Astrocyte of the cerebellum (primary cell): ENCODE measurements at regions of chr6 and their contacts with region 1.

Region 1: DNA sequence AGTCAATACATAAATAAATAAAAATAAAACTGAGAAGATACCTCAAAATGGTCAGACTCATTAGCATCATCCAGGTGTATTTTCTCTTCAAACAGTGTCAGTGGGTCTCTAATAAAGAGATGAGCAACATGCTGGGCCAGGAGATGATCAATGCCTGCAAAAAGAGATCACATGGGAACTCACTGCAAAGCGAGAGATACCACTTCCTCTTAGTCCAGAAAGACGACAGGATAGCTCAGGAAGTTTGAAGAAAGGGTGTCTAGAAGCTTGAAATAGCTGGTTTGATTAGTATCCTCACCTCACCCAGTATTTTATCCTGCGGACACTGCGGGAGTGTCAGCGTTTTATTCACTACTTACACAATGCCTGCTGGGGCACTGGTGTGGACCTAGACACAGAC is 38.0 kb downstream of the GCLC start:
- DNase-seq: no peak
- H3K4me3 ChIP-seq: no peak overlapping the region
- CTCF ChIP-seq: no peak

Region 2: DNA sequence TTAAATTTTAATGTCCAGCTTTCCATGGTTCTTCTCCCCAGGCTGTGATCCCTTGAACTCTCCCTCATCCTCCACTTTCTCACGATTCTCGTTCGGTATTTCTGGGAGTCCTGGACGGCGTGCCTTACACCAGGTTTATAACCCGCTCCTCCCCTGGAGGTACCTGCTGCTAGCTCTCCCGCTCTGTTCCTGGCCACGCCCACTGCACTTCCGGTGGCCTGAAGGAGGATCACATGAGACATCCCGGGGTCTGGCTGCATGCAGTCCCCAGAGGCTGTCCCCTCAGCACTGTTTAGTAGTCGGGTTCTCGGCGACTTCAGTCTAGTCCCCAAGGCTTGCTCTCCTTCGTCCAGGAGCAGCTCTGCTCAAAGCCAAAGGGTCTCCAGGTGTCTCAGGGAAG is 66.4 kb after region 1 on chr6:
- in situ Hi-C with region 1: loop called (anchors 5 kb)
- DNase-seq: no peak
- H3K4me3 ChIP-seq: no peak overlapping the region
- CTCF ChIP-seq: no peak

Region 3: GRCh38 chr6:53926525-53926924 is 419.7 kb after region 1 on chr6:
- in situ Hi-C with region 1: no loop called
- DNase-seq: no peak
- H3K4me3 ChIP-seq: no peak overlapping the region
- CTCF ChIP-seq: no peak